ENCODE measurements at regions of chr2 and their contacts with region 1.

Region 1: DNA sequence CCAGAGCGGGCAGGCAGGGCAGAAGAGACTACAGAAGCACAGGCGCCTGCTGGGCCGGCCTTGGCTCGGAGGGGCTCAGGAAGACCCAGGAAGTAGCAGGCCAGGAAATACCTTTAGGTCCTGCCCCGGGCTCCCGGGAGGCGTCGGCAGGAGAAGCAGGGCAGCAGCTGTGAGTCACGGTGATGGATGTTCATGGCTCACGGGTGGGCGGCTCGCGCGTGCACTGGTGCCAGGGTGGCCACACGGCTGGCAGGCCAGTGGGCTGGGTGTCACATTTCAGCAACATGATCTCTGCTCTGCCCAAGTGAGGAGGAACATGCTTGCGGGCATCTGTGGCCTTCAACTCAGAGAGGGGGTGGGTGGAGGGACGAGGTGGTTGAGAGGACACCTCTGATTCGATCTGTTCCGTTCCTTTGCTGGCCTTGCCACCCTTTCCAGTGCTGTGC is 139.3 kb downstream of the KLHL29 start:
- DNase-seq: peak; percentile 60
- H3K4me3 ChIP-seq: no peak overlapping the region
- H3K27ac ChIP-seq: peak overlapping the region; percentile 87
- H3K4me1 ChIP-seq: peaks cover 16% of the 10 kb centered on the region
- H3K27me3 ChIP-seq: peaks cover 5% of the 10 kb centered on the region
- CTCF ChIP-seq: peak in 1 of 4 experiments; percentile 7
- POLR2A ChIP-seq: peak; percentile 27

Region 2: DNA sequence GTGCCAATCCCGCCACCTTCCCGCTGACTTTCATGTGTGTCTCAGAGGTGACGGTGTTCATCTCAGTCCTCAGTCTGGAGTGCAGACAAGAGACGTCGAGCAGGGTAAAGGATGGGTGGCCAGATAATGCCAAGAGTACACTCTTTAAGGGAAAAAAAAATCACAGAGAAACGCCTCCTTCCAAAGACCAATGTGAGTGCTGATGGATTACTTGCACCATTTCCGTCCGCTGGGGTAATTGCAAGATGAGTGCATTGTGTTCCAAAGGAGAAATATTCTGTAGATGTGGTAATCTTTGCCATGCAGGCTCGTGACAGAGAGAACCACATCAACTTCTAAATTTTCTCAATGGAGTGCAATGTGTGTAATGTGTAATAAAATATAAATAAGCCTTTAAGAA is 58.3 kb before region 1 on chr2:
- intact Hi-C with region 1: loop called (anchors 5 kb)
- DNase-seq: no peak
- H3K4me3 ChIP-seq: no peak overlapping the region
- H3K27ac ChIP-seq: no peak overlapping the region
- H3K4me1 ChIP-seq: no peaks in the 10 kb centered on the region
- H3K27me3 ChIP-seq: no peaks in the 10 kb centered on the region
- CTCF ChIP-seq: no peak
- POLR2A ChIP-seq: no peak

Region 3: GRCh38 chr2:23566236-23567142 is 42.2 kb after region 1 on chr2:
- intact Hi-C with region 1: loop called (anchors 5 kb)
- DNase-seq: no peak
- H3K4me3 ChIP-seq: no peak overlapping the region
- H3K27ac ChIP-seq: peak overlapping the region; percentile 78 to 80
- H3K4me1 ChIP-seq: peaks cover 6% of the 10 kb centered on the region
- H3K27me3 ChIP-seq: no peaks in the 10 kb centered on the region
- CTCF ChIP-seq: peak in 1 of 4 experiments; percentile 34
- POLR2A ChIP-seq: no peak

Region 4: GRCh38 chr2:23602116-23602515 is 77.8 kb after region 1 on chr2:
- intact Hi-C with region 1: loop called (anchors 5 kb)
- DNase-seq: no peak
- H3K4me3 ChIP-seq: no peak overlapping the region
- H3K27ac ChIP-seq: peak overlapping the region; percentile 75 to 77
- H3K4me1 ChIP-seq: no peaks in the 10 kb centered on the region
- H3K27me3 ChIP-seq: no peaks in the 10 kb centered on the region
- CTCF ChIP-seq: no peak
- POLR2A ChIP-seq: no peak

Region 5: DNA sequence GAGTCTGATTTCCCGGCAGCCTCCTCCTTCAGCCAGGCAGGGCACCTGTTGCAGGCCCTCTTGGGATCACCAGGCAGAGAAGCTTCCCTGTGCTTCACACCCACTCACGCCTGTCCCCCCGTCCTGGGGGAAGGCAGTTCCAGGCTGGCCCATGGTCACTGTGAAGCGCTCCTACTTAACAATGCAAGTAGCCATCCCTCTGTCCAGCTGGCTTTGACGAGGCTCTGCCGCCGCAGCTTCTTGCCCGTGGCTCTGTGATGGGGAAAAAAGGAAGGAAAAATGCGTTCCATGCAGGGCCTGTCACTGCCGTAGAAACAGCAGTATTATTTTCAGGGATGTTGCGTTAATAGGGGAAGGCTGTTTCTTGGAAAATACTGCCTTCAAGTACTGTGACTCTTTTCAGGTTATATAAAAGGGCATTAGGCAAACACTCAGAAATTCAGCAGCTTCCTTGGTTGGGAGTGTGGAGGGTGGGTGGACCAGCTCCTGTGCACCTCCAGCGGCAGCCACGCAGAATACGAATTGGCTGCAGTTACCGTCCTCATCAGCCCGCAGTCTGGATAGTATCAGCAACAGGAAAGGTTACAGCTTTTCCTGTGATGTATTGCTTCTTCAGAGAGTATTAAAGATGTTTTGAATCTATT is 93.0 kb after region 1 on chr2:
- intact Hi-C with region 1: loop called (anchors 5 kb)
- DNase-seq: peak; percentile 74
- H3K4me3 ChIP-seq: peak overlapping the region in 1 of 2 donors; percentile 3
- H3K27ac ChIP-seq: peak overlapping the region; percentile 66 to 83
- H3K4me1 ChIP-seq: peaks cover 4% of the 10 kb centered on the region
- H3K27me3 ChIP-seq: no peaks in the 10 kb centered on the region
- CTCF ChIP-seq: peak in 3 of 4 experiments; percentile 29 to 63 (median 59)
- POLR2A ChIP-seq: no peak